ENCODE measurements at regions of chr16 and their contacts with region 1.

Region 1: GRCh38 chr16:6827267-6827666 is 505.4 kb upstream of the RBFOX1 start:
- DNase-seq: no peak
- ATAC-seq: peak; percentile 76

Region 2: DNA sequence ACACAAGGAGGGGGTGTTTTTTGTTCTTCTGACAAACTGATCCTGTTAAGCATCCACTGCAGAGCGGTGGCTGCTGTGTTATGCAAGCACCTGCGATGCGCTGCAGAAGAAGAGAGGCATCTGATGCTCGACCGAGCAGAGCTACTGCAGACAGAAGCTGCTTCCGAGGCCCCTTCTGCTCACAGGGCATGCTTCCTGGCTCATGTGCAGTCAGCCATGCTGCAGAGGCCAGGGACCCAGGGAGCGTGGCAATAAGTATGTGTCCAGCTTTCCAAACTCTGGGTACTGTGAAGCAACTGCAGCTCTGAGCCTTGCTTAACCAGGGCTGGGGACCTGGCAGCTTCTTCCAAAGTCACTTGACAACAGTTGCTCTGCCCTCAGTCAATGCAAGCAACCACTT is 56.7 kb after region 1 on chr16:
- intact Hi-C with region 1: loop called (anchors 2 kb)
- DNase-seq: no peak
- ATAC-seq: no peak

Region 3: GRCh38 chr16:8712589-8713361 is 1885.5 kb after region 1 on chr16:
- intact Hi-C with region 1: no loop called
- DNase-seq: no peak
- ATAC-seq: no peak

Measured in sciatic nerve (tissue), 2 donors.